Activated T-helper 1 cell treated with anti-CD3 and anti-CD28 coated beads, Interleukin-12 subunit alpha, Interleukin-12 subunit beta, Interleukin-2, Interleukin-4 antibody, amounts not matched to agents 30 ng/mL and 10 ng/mL and 1 ng/mL, durations not matched to agents 14 hours and 24 hours and 36 hours (primary cell): ENCODE measurements at regions of chr9 and their contacts with region 1.

Region 1: DNA sequence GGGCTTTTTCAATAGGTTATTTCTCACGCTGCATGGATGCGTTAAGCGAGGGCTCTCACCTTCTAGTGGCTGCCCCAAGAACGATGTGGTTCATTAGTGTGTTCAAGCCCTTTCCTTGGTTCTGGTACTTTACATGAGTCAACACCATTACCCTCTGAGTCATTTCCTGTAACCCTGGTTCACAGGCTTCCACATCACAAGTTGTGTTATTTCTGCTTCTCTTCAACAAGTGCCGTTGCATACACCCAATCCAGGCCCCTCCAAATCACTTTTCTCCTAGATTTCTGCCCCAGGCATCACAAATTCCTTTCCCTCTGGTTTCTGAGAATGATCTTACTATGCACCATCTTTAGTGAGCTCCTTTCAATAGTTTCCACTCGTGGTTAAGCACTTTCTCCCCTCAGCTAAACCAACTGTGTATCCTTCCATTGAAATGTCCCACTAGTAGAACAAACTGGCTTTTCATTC is 69.5 kb upstream of the RAD23B start:
- DNase-seq: peak; percentile 16
- H3K4me3 Mint-ChIP-seq: no peak overlapping the region
- H3K27ac Mint-ChIP-seq: peak overlapping the region; percentile 9
- H3K4me1 Mint-ChIP-seq: peaks cover 14% of the 10 kb centered on the region
- H3K27me3 Mint-ChIP-seq: peaks cover 3% of the 10 kb centered on the region

Region 2: GRCh38 chr9:107243751-107244150 is 30.2 kb after region 1 on chr9:
- intact Hi-C with region 1: loop called (anchors 1 kb)
- DNase-seq: peak; percentile 17
- H3K4me3 Mint-ChIP-seq: no peak overlapping the region
- H3K27ac Mint-ChIP-seq: peak overlapping the region; percentile 82
- H3K4me1 Mint-ChIP-seq: peaks cover 15% of the 10 kb centered on the region
- H3K27me3 Mint-ChIP-seq: peaks cover 6% of the 10 kb centered on the region

Region 3: DNA sequence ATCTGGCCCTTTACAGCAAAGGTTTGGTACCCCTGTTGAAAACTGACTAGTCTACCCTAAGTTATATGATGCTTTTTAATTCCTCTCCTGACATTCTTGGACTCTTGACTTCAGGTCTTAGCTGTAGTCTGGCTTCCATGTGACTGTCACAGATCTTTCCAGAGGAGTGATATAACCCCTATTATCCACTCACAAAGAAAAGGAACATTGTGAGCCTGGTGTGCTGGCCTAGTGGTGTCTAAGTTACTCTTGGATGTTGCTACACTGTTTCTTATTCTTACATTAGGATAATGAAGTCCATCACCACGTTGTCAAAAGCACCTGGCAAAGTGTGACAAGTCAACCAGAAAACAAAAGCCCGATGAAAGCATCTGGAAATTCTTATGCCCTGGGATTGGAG is 119.3 kb after region 1 on chr9:
- intact Hi-C with region 1: loop called (anchors 5 kb)
- DNase-seq: no peak
- H3K4me3 Mint-ChIP-seq: no peak overlapping the region
- H3K27ac Mint-ChIP-seq: no peak overlapping the region
- H3K4me1 Mint-ChIP-seq: no peaks in the 10 kb centered on the region
- H3K27me3 Mint-ChIP-seq: no peaks in the 10 kb centered on the region